ENCODE measurements at regions of chr2 and their contacts with region 1.

Region 1: GRCh38 chr2:217166241-217166850 is 306.5 kb upstream of the TNP1 start:
- DNase-seq: no peak
- H3K4me3 ChIP-seq: no peak overlapping the region
- H3K27ac ChIP-seq: no peak overlapping the region
- H3K27me3 ChIP-seq: peaks cover 0 to 6% (median 0%) of the 10 kb centered on the region in 45 donors
- CTCF ChIP-seq: peak; percentile 10 to 83 (median 61)

Region 2: GRCh38 chr2:216849987-216850386 is 316.4 kb before region 1 on chr2:
- intact Hi-C with region 1: loop called in 1 of 2 experiments (anchors 5 kb)
- DNase-seq: peak in 9 of 10 donors; percentile 51 to 84 (median 73)
- H3K4me3 ChIP-seq: peak overlapping the region in 18 of 59 donors; percentile 0 to 32 (median 19)
- H3K27ac ChIP-seq: peak overlapping the region in 41 of 59 donors; percentile 4 to 88 (median 62)
- H3K27me3 ChIP-seq: no peaks in the 10 kb centered on the region
- CTCF ChIP-seq: peak in 1 of 56 donors; percentile 26

Region 3: GRCh38 chr2:217277646-217278398 is 111.5 kb after region 1 on chr2:
- intact Hi-C with region 1: loop called in 1 of 2 experiments (anchors 10 kb)
- DNase-seq: peak in 8 of 10 donors; percentile 20 to 74 (median 56)
- H3K4me3 ChIP-seq: peak overlapping the region in 12 of 59 donors; percentile 0 to 44 (median 19)
- H3K27ac ChIP-seq: peak overlapping the region in 23 of 59 donors; percentile 0 to 75 (median 46)
- H3K27me3 ChIP-seq: no peaks in the 10 kb centered on the region
- CTCF ChIP-seq: peak in 1 of 56 donors; percentile 18

Region 4: GRCh38 chr2:217434181-217434975 is 268.0 kb after region 1 on chr2:
- intact Hi-C with region 1: loop called in 1 of 2 experiments (anchors 10 kb)
- DNase-seq: peak; percentile 63 to 96 (median 92)
- H3K4me3 ChIP-seq: peak overlapping the region in 29 of 59 donors; percentile 3 to 42 (median 24)
- H3K27ac ChIP-seq: peak overlapping the region in 18 of 59 donors; percentile 0 to 72 (median 34)
- H3K27me3 ChIP-seq: no peaks in the 10 kb centered on the region
- CTCF ChIP-seq: peak in 13 of 56 donors; percentile 7 to 46 (median 23)

Region 5: GRCh38 chr2:217510771-217511291 is 344.5 kb after region 1 on chr2:
- intact Hi-C with region 1: loop called in 1 of 2 experiments (anchors 5 kb)
- DNase-seq: peak in 8 of 10 donors; percentile 26 to 78 (median 50)
- H3K4me3 ChIP-seq: peak overlapping the region in 11 of 59 donors; percentile 0 to 46 (median 24)
- H3K27ac ChIP-seq: peak overlapping the region in 1 of 59 donors; percentile 11
- H3K27me3 ChIP-seq: no peaks in the 10 kb centered on the region
- CTCF ChIP-seq: peak; percentile 44 to 90 (median 78)

Measured in dorsolateral prefrontal cortex (tissue), 120 donors.